SK-N-SH (cell line): ENCODE measurements at regions of chr17 and their contacts with region 1.

Region 1: DNA sequence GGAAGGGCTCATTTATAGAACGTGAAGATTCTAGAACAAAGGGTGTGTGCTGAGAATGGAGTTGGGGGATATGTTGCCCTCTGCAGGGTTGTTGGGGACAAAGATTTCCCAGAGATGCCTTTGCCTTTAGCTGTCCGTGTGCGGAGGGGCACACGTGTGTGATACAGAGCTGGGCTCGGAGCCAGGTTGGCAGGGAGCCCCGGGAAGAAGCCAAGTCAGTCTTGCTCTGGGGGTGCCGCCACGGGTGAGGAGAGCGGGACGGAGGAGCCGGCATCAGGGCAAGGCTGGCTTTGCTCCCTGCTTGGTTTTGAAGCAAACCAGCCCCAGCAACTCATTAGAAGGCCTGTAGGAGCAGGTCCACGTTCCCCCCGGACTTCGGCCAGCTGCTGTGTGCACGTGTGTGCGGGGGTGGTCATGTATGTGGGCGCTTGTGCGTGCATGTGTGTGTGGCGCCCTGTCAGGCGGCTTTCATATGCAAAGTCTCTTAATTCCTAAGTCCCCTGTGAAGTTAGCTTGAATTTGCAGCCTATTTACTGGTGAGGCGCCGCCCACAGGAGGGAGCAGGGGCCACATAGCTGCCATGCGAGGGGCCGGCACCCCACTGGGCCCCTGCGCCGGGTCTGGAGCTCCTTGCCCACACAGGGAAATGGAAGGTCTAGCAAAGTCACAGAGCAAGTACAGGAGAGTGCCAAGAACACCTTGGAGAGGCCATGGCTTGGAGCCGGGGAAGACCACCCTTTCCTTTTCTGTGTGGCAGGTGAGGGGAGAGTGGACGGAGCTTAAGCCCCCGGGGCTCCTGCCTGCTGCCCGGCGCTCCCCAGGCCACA is 132.1 kb upstream of the CHMP6 start:
- DNase-seq: peak; percentile 88
- H3K4me3 ChIP-seq: no peak overlapping the region
- H3K27ac ChIP-seq: peak overlapping the region; percentile 72 to 96
- H3K4me1 ChIP-seq: peaks cover 35 to 55% of the 10 kb centered on the region in 2 experiments
- H3K27me3 ChIP-seq: no peaks in the 10 kb centered on the region
- CTCF ChIP-seq: peak; percentile 60
- EP300 ChIP-seq: peak; percentile 62 to 63; a peak in 3 of 4 replicates
- RAD21 ChIP-seq: peak; percentile 69

Region 2: GRCh38 chr17:80724775-80725266 is 134.7 kb before region 1 on chr17:
- CTCF ChIA-PET with region 1: interaction called, 13 read pairs
- POLR2A ChIA-PET with region 1: no interaction called
- DNase-seq: peak; percentile 68
- H3K4me3 ChIP-seq: no peak overlapping the region
- H3K27ac ChIP-seq: peak overlapping the region in 1 of 2 experiments; percentile 33; a peak in 1 of 4 replicates
- H3K4me1 ChIP-seq: peaks cover 13 to 44% of the 10 kb centered on the region in 2 experiments; a peak in 3 of 4 replicates
- H3K27me3 ChIP-seq: no peaks in the 10 kb centered on the region
- CTCF ChIP-seq: no peak
- EP300 ChIP-seq: no peak
- RAD21 ChIP-seq: no peak